Thyroid gland (tissue), 4 donors: ENCODE measurements at regions of chr3 and their contacts with region 1.

Region 1: GRCh38 chr3:154243353-154243752 is 80.9 kb downstream of the DHX36 start:
- DNase-seq: no peak
- H3K4me3 ChIP-seq: no peak overlapping the region
- H3K27ac ChIP-seq: peak overlapping the region in 1 of 3 donors; percentile 12
- H3K4me1 ChIP-seq: no peaks in the 10 kb centered on the region
- H3K27me3 ChIP-seq: no peaks in the 10 kb centered on the region
- CTCF ChIP-seq: no peak
- POLR2A ChIP-seq: no peak

Region 2: DNA sequence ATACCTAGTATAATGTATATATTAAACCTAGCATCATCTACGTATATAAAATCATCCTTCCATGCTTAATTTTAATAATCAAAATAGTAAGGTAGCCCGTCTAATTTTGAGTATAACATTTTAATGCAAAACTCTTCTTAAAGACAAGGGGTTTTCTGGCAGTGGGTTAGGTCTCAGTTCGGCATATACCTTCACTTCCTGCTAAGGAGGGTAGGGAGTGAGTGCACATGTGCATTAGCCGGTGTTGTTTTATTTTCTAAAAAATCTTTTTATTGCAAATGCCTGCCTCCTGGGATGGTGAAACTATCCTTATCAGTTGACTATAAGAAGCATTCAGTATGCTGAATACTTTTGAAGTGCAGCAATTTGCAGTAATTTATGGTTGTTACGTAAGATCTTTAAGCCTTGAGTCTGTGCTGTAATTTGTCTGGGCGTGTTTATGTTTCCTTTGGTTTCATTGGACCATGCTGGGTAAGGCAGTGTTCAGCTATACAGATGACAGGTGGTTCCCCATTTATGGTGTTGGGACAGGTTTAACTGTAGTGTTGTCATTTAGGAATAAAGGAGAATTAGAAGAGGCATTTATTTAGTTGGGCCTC is 110.5 kb before region 1 on chr3:
- intact Hi-C with region 1: loop called (anchors 10 kb)
- DNase-seq: no peak
- H3K4me3 ChIP-seq: no peak overlapping the region
- H3K27ac ChIP-seq: no peak overlapping the region
- H3K4me1 ChIP-seq: no peaks in the 10 kb centered on the region
- H3K27me3 ChIP-seq: no peaks in the 10 kb centered on the region
- CTCF ChIP-seq: no peak
- POLR2A ChIP-seq: no peak